ENCODE measurements at regions of chr1 and their contacts with region 1.

Region 1: DNA sequence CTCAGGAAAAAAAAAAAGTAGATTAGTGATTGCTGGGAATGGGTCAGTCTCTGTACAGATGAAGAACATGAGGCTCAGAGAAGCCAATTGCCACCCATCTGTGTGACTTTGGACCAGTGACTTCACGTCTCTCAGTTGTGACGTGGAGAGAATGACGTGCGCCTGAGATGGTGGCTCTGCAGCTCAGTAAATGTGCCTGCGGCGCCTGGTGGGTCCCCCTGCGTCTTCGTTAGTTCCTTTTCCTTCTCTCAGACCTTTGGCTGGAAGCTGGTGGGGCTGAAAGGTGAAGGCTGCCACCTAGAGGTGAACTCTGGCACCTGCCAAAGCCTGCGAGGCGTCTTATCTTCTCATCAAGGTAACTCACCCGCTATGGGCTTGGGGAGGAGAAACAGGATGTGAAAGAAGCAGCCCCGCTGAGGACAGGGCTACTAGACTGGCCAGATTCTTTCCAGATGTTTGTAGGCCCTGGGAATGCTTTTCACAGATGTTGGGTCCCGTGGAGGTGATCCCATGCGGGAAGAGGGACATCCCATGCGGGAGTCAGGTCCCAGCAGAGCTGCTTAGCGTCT is 8.7 kb upstream of the E2F2 start:
- DNase-seq: peak; percentile 49 to 94
- H3K4me3 ChIP-seq: peak overlapping the region in 1 of 2 donors; percentile 8
- H3K27ac ChIP-seq: no peak overlapping the region
- H3K4me1 ChIP-seq: peaks cover 0 to 5% of the 10 kb centered on the region in 2 donors
- H3K27me3 ChIP-seq: no peaks in the 10 kb centered on the region
- CTCF ChIP-seq: peak; percentile 86 to 96 (median 89)

Region 2: DNA sequence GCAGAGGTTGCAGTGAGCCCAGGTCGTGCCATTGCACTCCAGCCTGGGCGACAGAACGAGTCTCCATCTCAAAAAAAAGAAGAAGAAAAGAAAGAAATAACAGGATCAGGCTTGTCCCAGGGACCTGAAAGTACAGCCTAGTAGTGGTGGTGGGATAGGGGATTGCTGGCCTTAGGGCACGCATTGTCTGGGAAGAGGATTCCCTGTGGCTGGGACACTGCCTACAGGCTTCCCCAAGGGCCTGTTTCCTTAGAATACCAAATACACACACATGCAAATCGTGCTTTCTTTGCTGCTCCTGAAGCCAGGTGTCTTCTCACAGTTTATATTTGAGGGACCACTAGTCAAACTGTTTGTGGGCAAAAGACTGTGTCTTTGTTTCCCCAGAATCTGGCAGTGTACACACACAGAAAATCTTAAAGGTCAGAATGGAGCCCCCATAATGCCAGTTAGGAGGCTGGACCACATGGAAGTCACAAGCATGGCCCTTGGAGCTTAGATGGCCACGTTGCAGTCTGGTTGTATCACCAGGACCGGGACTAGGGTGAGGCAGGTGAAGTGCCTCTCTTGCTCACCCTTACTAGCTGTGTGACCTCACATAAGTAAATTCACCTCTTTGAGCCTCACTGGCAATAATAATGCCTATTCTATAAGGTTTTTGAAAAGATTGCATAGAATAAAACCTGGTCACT is 43.1 kb before region 1 on chr1:
- intact Hi-C with region 1: loop called (anchors 1 kb)
- DNase-seq: no peak
- H3K4me3 ChIP-seq: no peak overlapping the region
- H3K27ac ChIP-seq: no peak overlapping the region
- H3K4me1 ChIP-seq: peaks cover 0 to 3% of the 10 kb centered on the region in 2 donors
- H3K27me3 ChIP-seq: no peaks in the 10 kb centered on the region
- CTCF ChIP-seq: no peak

Region 3: DNA sequence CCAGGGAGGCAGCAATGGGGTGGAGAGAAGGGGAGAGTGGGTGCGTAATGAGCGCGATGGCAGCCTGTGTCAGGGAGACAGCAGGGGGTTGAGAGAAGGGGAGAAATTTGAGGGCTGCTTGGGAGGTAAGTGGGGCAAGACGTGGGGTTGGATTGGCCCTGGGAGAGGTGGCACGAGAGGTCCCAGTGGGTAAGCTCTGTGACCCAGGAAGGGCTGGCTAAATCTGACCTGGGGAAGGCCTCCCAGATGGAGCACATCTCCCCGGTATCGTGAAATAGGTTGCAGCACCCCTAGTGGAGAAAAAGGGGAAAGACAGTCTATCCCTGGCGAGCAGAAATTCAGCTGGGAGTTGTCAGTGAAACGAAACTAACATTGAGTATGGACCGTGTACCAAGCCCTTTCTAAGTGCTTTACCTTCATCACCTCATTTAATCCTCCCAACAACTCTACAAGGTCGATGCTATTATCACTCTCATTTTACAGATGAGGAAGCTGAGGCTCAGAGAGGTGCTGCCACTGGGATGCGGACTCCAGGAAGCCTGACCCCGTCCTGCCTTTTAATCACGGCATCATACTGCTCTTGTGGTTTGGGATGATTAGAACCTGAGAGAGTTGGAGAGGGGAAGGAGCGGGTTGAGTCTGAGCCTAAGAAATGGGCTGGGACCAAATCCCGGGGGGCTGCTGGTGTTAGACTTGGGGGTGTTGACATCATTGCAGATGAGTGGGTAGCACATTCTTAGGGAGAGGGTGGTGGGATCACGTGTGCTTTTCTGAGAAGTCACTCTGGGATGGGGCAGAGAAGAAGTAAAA is 95.3 kb after region 1 on chr1:
- intact Hi-C with region 1: loop called (anchors 1 kb)
- DNase-seq: peak in 1 of 2 donors; percentile 85
- H3K4me3 ChIP-seq: peak overlapping the region; percentile 58 to 68
- H3K27ac ChIP-seq: peak overlapping the region; percentile 89 to 91
- H3K4me1 ChIP-seq: peaks cover 0 to 3% of the 10 kb centered on the region in 2 donors
- H3K27me3 ChIP-seq: no peaks in the 10 kb centered on the region
- CTCF ChIP-seq: peak; percentile 84 to 94 (median 89)

Region 4: DNA sequence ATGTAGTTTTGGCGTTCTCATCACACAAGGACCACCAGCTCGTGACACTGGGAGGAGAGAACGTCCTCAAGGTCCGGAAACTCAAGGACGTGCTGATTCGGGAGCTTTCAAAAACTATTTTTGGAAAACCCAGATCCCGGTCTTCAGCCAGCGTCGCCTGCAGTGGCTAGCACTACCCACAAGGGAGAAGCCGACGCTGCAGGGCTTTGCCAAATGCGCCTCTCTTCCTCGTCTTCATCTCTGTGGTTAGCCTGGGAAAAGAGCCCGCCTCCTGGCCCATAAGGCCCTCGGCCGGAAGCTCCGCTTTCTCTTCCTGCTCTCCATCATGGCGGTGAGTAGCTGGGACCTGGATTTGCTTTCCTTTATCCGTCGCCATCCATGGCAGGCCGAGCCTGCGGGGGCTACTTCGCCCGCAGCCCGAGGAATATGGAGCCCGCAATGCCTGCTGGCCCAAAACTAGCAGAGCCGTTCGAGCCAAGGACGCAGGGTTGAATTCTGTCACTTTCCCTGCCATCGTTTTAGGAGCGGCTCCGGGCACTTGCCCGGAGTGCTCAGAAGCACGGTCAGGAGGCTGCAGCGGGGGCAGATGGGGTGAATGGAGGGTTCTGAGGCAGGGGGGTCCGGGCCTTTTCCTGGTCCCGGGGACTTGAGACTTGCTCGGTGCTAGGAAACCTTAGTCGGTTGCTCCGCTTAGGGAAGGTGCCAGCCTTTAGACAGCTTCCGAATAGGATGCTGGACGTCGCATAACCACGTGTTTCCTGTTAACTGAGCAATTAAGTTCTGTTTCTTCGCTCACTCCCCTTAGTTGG is 151.9 kb after region 1 on chr1 and contains the start of gene RPL11:
- intact Hi-C with region 1: loop called (anchors 5 kb)
- DNase-seq: peak; percentile 65 to 96
- H3K4me3 ChIP-seq: peak within 1 kb of the TSS; percentile 74 to 82
- H3K27ac ChIP-seq: peak within 1 kb of the TSS; percentile 80 to 88
- H3K4me1 ChIP-seq: peaks cover 8 to 17% of the 10 kb centered on the region in 2 donors
- H3K27me3 ChIP-seq: no peaks in the 10 kb centered on the region
- CTCF ChIP-seq: peak; percentile 76 to 88 (median 84)
- total RNA-seq, gene RPL11: 462 TPM